A673 (cell line): ENCODE measurements at regions of chrX and their contacts with region 1.

Region 1: DNA sequence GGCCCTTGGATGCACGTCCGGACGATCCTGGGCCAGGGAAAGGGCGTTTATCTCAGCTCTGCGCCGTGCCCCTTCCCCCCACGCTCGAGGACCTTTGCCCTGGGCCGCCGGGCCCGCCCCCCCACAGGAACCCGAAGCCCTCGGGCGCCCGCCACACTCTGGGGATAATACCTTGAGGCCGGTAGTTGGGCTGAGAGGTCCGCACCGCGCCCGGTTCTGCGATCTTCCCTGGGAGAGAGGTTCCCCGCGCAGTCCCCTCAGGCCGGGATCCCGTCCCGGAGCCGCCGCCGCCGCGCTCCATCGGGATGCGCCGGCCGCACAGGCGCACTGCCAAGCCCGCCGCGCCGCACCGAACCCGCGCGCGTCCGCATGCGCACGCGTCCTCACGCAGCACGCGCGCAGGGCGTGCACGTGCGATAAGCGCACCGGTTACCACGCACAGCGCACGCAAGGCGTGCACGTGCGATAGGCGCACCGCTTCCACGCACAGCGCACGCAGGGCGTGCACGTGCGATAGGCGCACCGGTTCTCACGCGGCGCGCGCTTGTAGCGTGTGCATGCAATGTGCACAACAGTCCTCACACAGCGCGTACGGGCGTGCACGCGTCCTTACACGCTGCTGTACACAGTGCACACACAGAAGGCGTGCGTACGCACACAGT is at the start of gene MAP7D2:
- DNase-seq: no peak
- H3K4me3 ChIP-seq: peak within 1 kb of the TSS; percentile 29
- H3K27ac ChIP-seq: no peak within 1 kb of the TSS
- H3K4me1 ChIP-seq: no peaks in the 10 kb centered on the region
- H3K27me3 ChIP-seq: no peaks in the 10 kb centered on the region
- CTCF ChIP-seq: no peak
- total RNA-seq, gene MAP7D2: 0.83 and 1.2 TPM in 2 replicates

Region 2: GRCh38 chrX:20362268-20363267 is 245.9 kb after region 1 on chrX:
- CTCF ChIA-PET with region 1: interaction called, 10 read pairs
- POLR2A ChIA-PET with region 1: no interaction called
- intact Hi-C with region 1: no loop called
- DNase-seq: no peak
- H3K4me3 ChIP-seq: no peak overlapping the region
- H3K27ac ChIP-seq: no peak overlapping the region
- H3K4me1 ChIP-seq: peaks cover 12% of the 10 kb centered on the region
- H3K27me3 ChIP-seq: no peaks in the 10 kb centered on the region
- CTCF ChIP-seq: no peak

Region 3: DNA sequence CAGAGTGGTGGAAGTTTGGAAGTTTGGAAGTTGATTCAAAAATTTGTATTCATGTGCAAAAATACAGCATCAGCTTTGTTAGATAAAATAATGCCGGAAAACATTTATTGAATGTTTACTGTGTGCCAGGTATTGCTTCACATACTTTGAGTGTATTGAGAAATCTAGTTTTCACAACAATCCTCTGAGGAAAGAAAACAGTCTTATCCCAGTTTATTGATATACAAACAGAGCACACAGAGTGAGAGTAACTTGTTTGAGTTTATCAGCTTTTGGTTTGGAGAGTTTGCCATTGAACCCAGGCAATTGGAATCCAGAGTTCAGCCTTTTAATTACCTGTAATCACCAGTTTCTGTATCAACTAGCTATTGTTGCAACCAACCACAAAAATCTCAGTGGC is 277.2 kb after region 1 on chrX:
- CTCF ChIA-PET with region 1: no interaction called
- POLR2A ChIA-PET with region 1: no interaction called
- intact Hi-C with region 1: no loop called
- DNase-seq: no peak
- H3K4me3 ChIP-seq: no peak overlapping the region
- H3K27ac ChIP-seq: no peak overlapping the region
- H3K4me1 ChIP-seq: no peaks in the 10 kb centered on the region
- H3K27me3 ChIP-seq: peaks cover 6% of the 10 kb centered on the region
- CTCF ChIP-seq: no peak

Region 4: GRCh38 chrX:20718592-20719389 is 602.1 kb after region 1 on chrX:
- CTCF ChIA-PET with region 1: no interaction called
- POLR2A ChIA-PET with region 1: no interaction called
- intact Hi-C with region 1: no loop called
- DNase-seq: no peak
- H3K4me3 ChIP-seq: no peak overlapping the region
- H3K27ac ChIP-seq: no peak overlapping the region
- H3K4me1 ChIP-seq: no peaks in the 10 kb centered on the region
- H3K27me3 ChIP-seq: no peaks in the 10 kb centered on the region
- CTCF ChIP-seq: no peak